Activated CD8-positive, alpha-beta T cell treated with anti-CD3 and anti-CD28 coated beads, Interleukin-2, amount 10 ng/mL, durations not matched to agents 7 days and 5 days (primary cell): ENCODE measurements at regions of chr9 and their contacts with region 1.

Region 1: DNA sequence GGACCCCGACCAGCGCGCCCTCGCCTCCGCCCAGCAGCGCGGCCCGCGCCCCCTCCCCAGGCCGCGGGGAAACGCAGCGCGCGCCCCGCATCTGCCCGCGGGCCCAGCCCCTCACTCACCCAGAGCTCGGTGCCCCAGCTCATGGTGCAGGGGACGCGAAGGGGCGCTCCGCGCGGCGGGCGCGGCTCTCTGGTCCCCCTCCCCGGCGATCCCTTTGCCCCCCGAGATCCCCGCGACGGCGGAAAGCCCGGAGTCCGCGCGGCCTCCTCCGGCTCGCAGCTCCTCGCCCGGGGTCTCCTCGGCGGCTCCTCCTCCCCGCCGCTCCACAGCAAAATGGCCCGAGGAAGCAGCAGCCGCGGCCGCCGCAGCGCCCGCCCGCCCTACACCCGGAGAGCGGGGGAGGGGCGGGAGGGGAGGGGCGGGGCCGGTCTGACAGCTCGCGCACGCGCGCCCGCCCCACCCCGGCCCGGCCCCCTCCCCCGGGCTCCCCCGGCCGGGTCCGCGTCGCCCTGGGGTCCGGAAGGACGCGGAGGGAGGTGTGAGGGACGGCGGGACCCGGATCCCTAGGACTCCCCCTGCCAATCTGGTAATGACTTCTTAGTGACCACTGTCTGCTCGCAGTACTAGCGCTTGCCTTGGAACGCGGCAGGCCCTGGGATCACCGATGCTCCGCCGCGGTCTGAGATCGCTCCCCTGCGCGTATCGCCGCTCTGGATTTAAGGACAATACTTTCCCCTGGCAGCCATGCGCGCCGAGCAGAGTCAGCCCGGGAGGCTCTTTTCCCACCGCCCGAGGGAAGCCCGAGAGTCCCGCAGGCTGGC is at the start of gene FNBP1:
- DNase-seq: peak; percentile 83
- ATAC-seq: peak; percentile 63
- H3K4me3 Mint-ChIP-seq: peak within 1 kb of the TSS; percentile 99
- H3K27ac Mint-ChIP-seq: peak within 1 kb of the TSS; percentile 98
- H3K4me1 Mint-ChIP-seq: peaks cover 48% of the 10 kb centered on the region
- H3K27me3 Mint-ChIP-seq: no peaks in the 10 kb centered on the region
- total RNA-seq, gene FNBP1: 173 to 176 TPM

Region 2: GRCh38 chr9:129868916-129869486 is 174.0 kb before region 1 on chr9:
- CTCF ChIA-PET with region 1: no interaction called
- POLR2A ChIA-PET with region 1: interaction called, 10 read pairs
- DNase-seq: peak; percentile 96
- ATAC-seq: peak; percentile 85
- H3K4me3 Mint-ChIP-seq: peak overlapping the region; percentile 67
- H3K27ac Mint-ChIP-seq: peak overlapping the region; percentile 95
- H3K4me1 Mint-ChIP-seq: peaks cover 84% of the 10 kb centered on the region
- H3K27me3 Mint-ChIP-seq: no peaks in the 10 kb centered on the region

Region 3: DNA sequence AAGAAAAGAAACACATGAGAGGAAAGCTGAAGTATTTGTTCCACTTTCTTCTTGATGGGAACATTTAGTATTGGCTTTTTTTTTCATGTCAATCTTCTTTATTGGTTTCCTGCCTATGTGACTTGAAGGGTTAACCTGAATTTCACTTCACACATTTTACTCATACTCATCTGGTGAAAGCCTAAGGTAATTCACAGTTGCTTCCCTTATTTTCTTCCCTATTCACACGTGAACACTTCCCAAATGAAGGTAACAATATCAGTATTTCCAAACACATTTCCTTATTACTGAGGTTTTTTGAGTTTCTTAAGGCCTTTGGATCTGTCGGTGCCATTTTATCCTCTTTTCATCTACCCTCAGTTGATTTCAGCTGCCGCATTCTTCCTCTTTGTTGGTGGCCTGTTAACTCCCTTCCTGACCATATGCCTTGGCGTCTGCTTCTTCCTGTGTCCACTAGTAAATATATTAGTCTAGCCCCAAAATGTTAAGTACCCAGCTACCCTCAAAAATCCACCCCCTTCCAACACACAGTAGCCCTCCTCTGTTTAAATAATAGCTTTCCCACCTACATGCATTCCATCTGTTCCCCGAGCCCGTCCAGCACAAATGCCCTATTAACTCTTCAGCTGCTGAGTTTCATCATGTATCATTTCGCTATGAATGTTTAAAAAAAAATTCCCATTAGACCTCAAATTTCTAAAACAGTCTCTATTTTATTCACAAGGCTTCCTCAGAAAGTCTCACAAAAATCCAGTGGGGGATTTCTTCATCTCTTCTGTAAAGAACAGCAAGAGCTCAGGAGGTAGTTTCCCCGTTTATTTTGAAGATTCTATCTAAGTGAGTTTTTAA is 110.5 kb before region 1 on chr9:
- CTCF ChIA-PET with region 1: interaction called, 16 read pairs
- POLR2A ChIA-PET with region 1: interaction called, 4 read pairs
- DNase-seq: no peak
- ATAC-seq: no peak
- H3K4me3 Mint-ChIP-seq: peak overlapping the region; percentile 59
- H3K27ac Mint-ChIP-seq: peak overlapping the region; percentile 88
- H3K4me1 Mint-ChIP-seq: peaks cover 65% of the 10 kb centered on the region
- H3K27me3 Mint-ChIP-seq: no peaks in the 10 kb centered on the region

Region 4: GRCh38 chr9:130029223-130029973 is 13.6 kb before region 1 on chr9:
- CTCF ChIA-PET with region 1: interaction called, 17 read pairs
- POLR2A ChIA-PET with region 1: interaction called, 68 read pairs
- DNase-seq: peak; percentile 41
- ATAC-seq: peak; percentile 26
- H3K4me3 Mint-ChIP-seq: peak overlapping the region; percentile 32
- H3K27ac Mint-ChIP-seq: peak overlapping the region; percentile 78
- H3K4me1 Mint-ChIP-seq: peaks cover 91% of the 10 kb centered on the region
- H3K27me3 Mint-ChIP-seq: no peaks in the 10 kb centered on the region

Region 5: GRCh38 chr9:130053504-130054324 is 10.7 kb after region 1 on chr9 and contains the start of gene GPR107:
- CTCF ChIA-PET with region 1: interaction called, 13 read pairs
- POLR2A ChIA-PET with region 1: interaction called, 24 read pairs
- DNase-seq: peak; percentile 82
- ATAC-seq: peak; percentile 94
- H3K4me3 Mint-ChIP-seq: peak within 1 kb of the TSS; percentile 93
- H3K27ac Mint-ChIP-seq: peak within 1 kb of the TSS; percentile 93
- H3K4me1 Mint-ChIP-seq: peaks cover 45% of the 10 kb centered on the region
- H3K27me3 Mint-ChIP-seq: no peaks in the 10 kb centered on the region
- total RNA-seq, gene GPR107: 22.5 to 24.4 TPM

Region 6: DNA sequence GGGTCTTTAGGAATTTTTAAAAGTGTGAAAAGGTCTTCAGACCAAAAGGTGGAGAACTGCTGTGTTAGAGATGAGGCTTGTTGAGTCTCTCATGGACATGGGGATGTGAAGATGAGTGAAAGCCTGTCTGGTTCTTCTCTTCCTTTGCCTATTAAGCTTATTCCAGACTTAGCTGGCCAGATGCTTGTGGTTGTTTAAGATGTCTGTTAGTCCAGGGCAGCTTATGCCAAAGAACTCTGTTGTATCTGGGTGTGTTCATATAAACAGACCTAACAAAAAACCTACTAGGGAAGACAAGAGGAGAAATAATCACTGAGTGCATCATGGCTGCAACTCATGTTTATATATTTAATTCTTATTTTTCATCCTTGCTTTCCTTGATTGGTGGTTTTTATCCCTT is 71.7 kb after region 1 on chr9:
- CTCF ChIA-PET with region 1: no interaction called
- POLR2A ChIA-PET with region 1: no interaction called
- DNase-seq: no peak
- ATAC-seq: no peak
- H3K4me3 Mint-ChIP-seq: no peak overlapping the region
- H3K27ac Mint-ChIP-seq: no peak overlapping the region
- H3K4me1 Mint-ChIP-seq: peaks cover 7% of the 10 kb centered on the region
- H3K27me3 Mint-ChIP-seq: no peaks in the 10 kb centered on the region

Region 7: GRCh38 chr9:131037335-131038255 is 994.6 kb after region 1 on chr9:
- CTCF ChIA-PET with region 1: no interaction called
- POLR2A ChIA-PET with region 1: no interaction called
- DNase-seq: no peak
- ATAC-seq: no peak
- H3K4me3 Mint-ChIP-seq: no peak overlapping the region
- H3K27ac Mint-ChIP-seq: no peak overlapping the region
- H3K4me1 Mint-ChIP-seq: no peaks in the 10 kb centered on the region
- H3K27me3 Mint-ChIP-seq: no peaks in the 10 kb centered on the region